ENCODE measurements at regions of chr2 and their contacts with region 1.

Region 1: GRCh38 chr2:246489-247144 is 17.2 kb downstream of the SH3YL1 start:
- DNase-seq: no peak
- ATAC-seq: no peak
- H3K4me3 ChIP-seq: no peak overlapping the region
- H3K27ac ChIP-seq: no peak overlapping the region
- H3K4me1 ChIP-seq: no peaks in the 10 kb centered on the region
- H3K27me3 ChIP-seq: no peaks in the 10 kb centered on the region
- CTCF ChIP-seq: peak in 2 of 5 experiments; percentile 39 to 43
- POLR2A ChIP-seq: no peak

Region 2: DNA sequence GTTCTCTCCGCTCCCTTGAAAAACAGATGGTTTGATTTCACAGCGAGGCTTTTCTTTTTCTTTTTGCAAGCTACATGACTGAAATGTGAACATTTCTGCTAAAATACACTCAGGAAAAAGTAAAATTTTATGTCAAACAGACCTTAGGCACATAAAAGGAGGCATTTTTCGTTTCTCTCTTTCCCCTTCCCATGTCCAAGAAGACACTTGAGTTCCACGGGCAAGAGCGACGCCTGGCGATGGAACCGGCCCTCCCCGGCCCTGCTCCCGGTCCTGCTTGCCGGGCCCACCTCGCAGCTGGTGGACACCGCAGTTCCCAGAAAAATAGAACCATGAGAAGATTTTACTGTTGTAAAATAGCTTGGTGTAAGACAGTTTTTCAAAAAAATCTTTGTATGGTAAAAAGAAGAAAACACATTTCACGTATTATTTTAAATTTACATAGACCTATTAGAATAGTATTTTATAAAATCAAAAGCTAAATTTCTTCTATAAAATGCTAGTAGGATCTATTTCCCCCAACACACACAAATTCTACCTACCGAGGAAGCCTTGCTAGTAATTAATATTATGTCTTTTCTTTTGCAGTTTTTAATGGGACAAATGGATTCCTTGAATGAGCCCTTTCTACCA is 43.6 kb after region 1 on chr2:
- in situ Hi-C with region 1: no loop called
- intact Hi-C with region 1: loop called (anchors 2 kb)
- DNase-seq: peak; percentile 13 to 33
- ATAC-seq: peak in 1 of 2 donors; percentile 51
- H3K4me3 ChIP-seq: peak overlapping the region; percentile 51 to 70 (median 56)
- H3K27ac ChIP-seq: no peak overlapping the region
- H3K4me1 ChIP-seq: peaks cover 5 to 12% of the 10 kb centered on the region in 2 donors
- H3K27me3 ChIP-seq: peaks cover 21 to 33% (median 30%) of the 10 kb centered on the region in 3 donors
- CTCF ChIP-seq: peak; percentile 16 to 69 (median 38)
- POLR2A ChIP-seq: no peak